HepG2 (cell line): ENCODE measurements at regions of chr9 and their contacts with region 1.

Region 1: GRCh38 chr9:385818-386398 is 171.2 kb downstream of the DOCK8 start:
- DNase-seq: peak; percentile 44
- ATAC-seq: peak; percentile 93
- H3K4me3 ChIP-seq: no peak overlapping the region
- H3K27ac ChIP-seq: no peak overlapping the region
- H3K4me1 ChIP-seq: no peaks in the 10 kb centered on the region
- H3K27me3 ChIP-seq: no peaks in the 10 kb centered on the region
- CTCF ChIP-seq: peak; percentile 83
- EP300 ChIP-seq: no peak
- POLR2A ChIP-seq: no peak
- RAD21 ChIP-seq: peak; percentile 59

Region 2: GRCh38 chr9:503881-504852 is 118.3 kb after region 1 on chr9:
- CTCF ChIA-PET with region 1: no interaction called
- POLR2A ChIA-PET with region 1: no interaction called
- in situ Hi-C with region 1: no loop called
- intact Hi-C with region 1: loop called (anchors 5 kb)
- DNase-seq: peak; percentile 48
- ATAC-seq: peak; percentile 92
- H3K4me3 ChIP-seq: peak within 1 kb of the TSS; percentile 43 to 70 (median 55); a peak in 5 of 6 replicates
- H3K27ac ChIP-seq: no peak within 1 kb of the TSS
- H3K4me1 ChIP-seq: peaks cover 14% of the 10 kb centered on the region
- H3K27me3 ChIP-seq: peaks cover 4 to 34% of the 10 kb centered on the region in 2 experiments; a peak in 3 of 5 replicates
- CTCF ChIP-seq: peak; percentile 56
- EP300 ChIP-seq: no peak
- POLR2A ChIP-seq: no peak
- RAD21 ChIP-seq: peak; percentile 64

Region 3: DNA sequence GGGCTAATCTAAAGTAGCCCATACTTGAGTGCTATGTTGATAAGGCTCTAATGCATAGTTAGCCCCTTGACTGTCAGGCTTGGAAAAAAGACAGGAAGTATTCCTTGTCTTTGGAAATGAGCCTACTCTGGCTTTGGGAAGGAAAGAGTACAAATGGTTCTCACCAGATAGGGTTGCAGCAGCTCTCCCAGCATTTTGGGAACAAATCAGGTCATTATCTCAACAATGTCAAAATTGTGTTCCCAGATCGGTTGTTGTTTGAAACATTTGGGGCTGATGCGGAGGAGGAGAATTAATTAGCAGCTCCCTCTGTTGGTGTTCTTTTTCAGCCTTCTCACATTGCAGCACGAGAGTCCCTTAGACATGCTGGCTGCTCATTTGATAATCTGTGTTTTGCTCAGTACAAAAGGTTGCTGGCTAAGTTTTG is 160.9 kb after region 1 on chr9:
- CTCF ChIA-PET with region 1: interaction called, 4 read pairs
- POLR2A ChIA-PET with region 1: no interaction called
- in situ Hi-C with region 1: loop called (anchors 10 kb)
- intact Hi-C with region 1: loop called (anchors 1 kb)
- DNase-seq: peak; percentile 16
- ATAC-seq: peak; percentile 50; the same call in 2 of the 3 replicates
- H3K4me3 ChIP-seq: no peak overlapping the region
- H3K27ac ChIP-seq: no peak overlapping the region
- H3K4me1 ChIP-seq: no peaks in the 10 kb centered on the region
- H3K27me3 ChIP-seq: no peaks in the 10 kb centered on the region
- CTCF ChIP-seq: peak; percentile 44
- EP300 ChIP-seq: no peak
- POLR2A ChIP-seq: no peak
- RAD21 ChIP-seq: 0 out of 2 replicates have a peak, but pooled peaks have one; percentile 26

Region 4: GRCh38 chr9:806285-807156 is 420.6 kb after region 1 on chr9:
- CTCF ChIA-PET with region 1: interaction called, 10 read pairs
- POLR2A ChIA-PET with region 1: no interaction called
- in situ Hi-C with region 1: no loop called
- intact Hi-C with region 1: loop called (anchors 1 kb)
- DNase-seq: peak; percentile 35
- ATAC-seq: peak; percentile 79
- H3K4me3 ChIP-seq: no peak overlapping the region
- H3K27ac ChIP-seq: no peak overlapping the region
- H3K4me1 ChIP-seq: no peaks in the 10 kb centered on the region
- H3K27me3 ChIP-seq: no peaks in the 10 kb centered on the region
- CTCF ChIP-seq: peak; percentile 73
- EP300 ChIP-seq: no peak
- POLR2A ChIP-seq: no peak
- RAD21 ChIP-seq: peak; percentile 48

Region 5: DNA sequence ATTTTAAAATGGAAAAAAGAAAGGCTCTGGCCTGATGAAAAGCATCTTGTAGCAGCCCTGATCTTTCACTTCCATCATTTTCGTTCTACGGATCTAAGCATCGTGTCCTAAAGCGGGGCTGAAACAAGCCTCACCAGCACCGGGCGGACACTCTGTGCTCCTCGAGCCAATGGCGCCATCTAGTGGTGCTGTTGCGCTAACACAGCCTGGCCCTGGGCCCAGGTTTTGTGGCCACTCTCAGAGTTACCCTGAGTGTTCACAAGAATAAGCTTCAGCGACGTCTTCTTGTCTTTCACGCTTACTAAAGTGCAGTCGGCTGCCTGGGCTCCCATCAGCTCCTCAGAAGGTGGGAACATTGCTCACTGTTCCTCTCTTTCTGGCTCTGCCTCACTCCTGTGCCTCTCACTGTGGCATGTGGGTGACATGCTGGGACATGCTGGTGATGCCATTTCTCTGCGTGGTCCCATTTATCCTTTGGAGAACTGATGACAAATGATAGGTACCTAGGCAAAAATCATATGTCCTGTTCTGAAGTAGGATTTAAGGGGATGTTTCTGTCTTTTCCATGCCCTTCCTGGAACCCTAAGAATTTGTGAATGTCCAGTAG is 623.3 kb after region 1 on chr9:
- CTCF ChIA-PET with region 1: interaction called, 7 read pairs
- POLR2A ChIA-PET with region 1: no interaction called
- in situ Hi-C with region 1: no loop called
- intact Hi-C with region 1: loop called (anchors 5 kb)
- DNase-seq: peak; percentile 60
- ATAC-seq: peak; percentile 99
- H3K4me3 ChIP-seq: no peak overlapping the region
- H3K27ac ChIP-seq: no peak overlapping the region
- H3K4me1 ChIP-seq: no peaks in the 10 kb centered on the region
- H3K27me3 ChIP-seq: peaks cover 0 to 8% of the 10 kb centered on the region in 2 experiments; a peak in 1 of 5 replicates
- CTCF ChIP-seq: peak; percentile 94
- EP300 ChIP-seq: no peak
- POLR2A ChIP-seq: no peak
- RAD21 ChIP-seq: peak; percentile 81